ENCODE measurements at regions of chr12 and their contacts with region 1.

Region 1: DNA sequence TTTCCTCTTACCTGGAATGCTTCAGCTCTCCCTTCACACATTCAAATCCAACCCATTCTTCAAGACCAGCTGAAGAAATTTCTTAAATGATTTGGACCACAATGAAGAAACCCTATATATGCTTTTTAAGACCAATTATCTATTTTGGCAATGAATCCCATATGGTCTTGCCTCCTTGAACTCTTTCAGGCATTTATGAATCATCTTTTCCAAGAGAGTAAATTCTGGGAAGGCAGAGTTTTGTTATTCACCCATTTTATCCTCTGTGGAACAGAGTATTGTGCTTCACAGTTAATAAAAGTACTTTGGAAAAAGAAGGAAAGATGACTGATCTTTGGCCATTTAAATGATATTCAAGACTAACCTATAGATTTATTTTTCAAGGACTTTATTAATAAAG is 14.0 kb downstream of the GIT2 start:
- DNase-seq: no peak
- H3K4me3 Mint-ChIP-seq: no peak overlapping the region
- H3K27ac Mint-ChIP-seq: peak overlapping the region; percentile 4
- H3K4me1 Mint-ChIP-seq: peaks cover 56% of the 10 kb centered on the region
- H3K27me3 Mint-ChIP-seq: no peaks in the 10 kb centered on the region

Region 2: DNA sequence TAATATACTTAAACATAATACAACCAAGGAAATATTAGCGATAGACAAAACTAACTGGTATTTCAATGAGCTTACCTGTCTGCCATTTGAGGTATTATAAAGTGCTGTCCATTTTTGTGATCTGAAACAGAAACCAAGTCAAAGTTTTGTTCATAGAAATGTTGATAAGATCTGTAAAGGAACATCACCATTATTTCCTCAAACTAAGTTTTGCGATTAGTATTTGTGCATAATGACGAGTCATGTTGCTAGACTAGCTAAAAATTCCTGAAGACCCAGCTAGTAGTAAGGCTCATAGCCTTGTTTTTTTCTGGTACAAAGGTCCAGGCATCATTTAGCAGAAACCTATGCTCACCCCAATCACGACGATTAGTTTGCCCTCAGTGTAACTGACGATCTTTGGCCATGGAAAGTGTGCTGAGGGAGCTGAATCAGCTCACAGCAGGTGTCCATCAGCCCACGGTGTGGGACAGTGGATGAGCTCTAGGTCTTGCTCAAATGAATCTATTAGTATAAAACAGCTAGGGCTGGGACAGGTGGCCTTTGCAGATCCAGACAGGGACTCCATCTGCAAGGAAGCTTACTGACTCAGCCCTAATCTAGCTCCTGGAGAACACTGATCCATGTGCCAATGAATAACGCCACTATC is 14.7 kb before region 1 on chr12:
- CTCF ChIA-PET with region 1: interaction called, 3 read pairs
- POLR2A ChIA-PET with region 1: interaction called, 11 read pairs
- DNase-seq: peak; percentile 31
- H3K4me3 Mint-ChIP-seq: peak overlapping the region; percentile 61
- H3K27ac Mint-ChIP-seq: peak overlapping the region; percentile 85
- H3K4me1 Mint-ChIP-seq: peaks cover 45% of the 10 kb centered on the region
- H3K27me3 Mint-ChIP-seq: no peaks in the 10 kb centered on the region

Measured in activated CD4-positive, alpha-beta memory T cell treated with anti-CD3 and anti-CD28 coated beads, Interleukin-2, amount 10 ng/mL, durations not matched to agents 7 days and 5 days (primary cell).